ENCODE measurements at regions of chr4 and their contacts with region 1.

Region 1: GRCh38 chr4:115851918-115852766 is 738.7 kb upstream of the NDST4 start:
- DNase-seq: peak; percentile 32
- H3K4me3 ChIP-seq: no peak overlapping the region
- H3K27ac ChIP-seq: no peak overlapping the region
- H3K4me1 ChIP-seq: no peaks in the 10 kb centered on the region
- H3K27me3 ChIP-seq: no peaks in the 10 kb centered on the region
- CTCF ChIP-seq: peak; percentile 62 to 79

Region 2: DNA sequence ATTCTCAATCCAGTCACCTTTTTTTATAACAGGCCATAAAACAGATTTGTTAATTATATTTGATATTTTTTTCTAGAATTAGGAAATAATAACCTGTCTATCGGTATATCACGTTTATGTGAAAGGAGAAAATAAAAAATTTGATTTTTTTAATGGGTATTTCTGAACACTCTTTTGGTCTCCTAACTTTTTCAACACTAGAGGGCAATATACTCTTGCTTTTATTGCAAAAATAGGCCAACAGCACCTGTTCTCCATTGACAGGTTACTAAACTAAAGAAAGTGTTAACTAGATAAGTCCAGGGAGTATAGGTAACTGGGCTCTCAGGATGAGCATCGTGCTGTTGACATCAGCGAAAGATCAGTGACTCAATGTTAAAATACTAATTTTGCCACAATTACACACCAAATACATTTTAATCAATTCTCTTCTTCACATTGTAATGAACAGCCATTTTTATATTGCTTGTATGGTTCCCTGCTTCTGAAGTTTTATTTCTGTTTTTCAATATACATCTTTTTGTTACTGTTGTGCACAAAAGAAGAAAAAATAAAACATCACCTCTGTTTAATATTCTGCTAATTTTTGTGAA is 761.6 kb before region 1 on chr4:
- CTCF ChIA-PET with region 1: no interaction called
- dilution Hi-C with region 1: no loop called
- in situ Hi-C with region 1: no loop called
- intact Hi-C with region 1: loop called (anchors 1 kb)
- DNase-seq: peak; percentile 4
- H3K4me3 ChIP-seq: no peak overlapping the region
- H3K27ac ChIP-seq: no peak overlapping the region
- H3K4me1 ChIP-seq: no peaks in the 10 kb centered on the region
- H3K27me3 ChIP-seq: no peaks in the 10 kb centered on the region
- CTCF ChIP-seq: peak; percentile 63